Ascending aorta (tissue), 2 donors: ENCODE measurements at regions of chr15 and their contacts with region 1.

Region 1: GRCh38 chr15:73972984-73973682 is 19.0 kb downstream of the STOML1 start:
- DNase-seq: peak; percentile 21 to 93
- H3K4me3 ChIP-seq: peak overlapping the region; percentile 39 to 50
- H3K27ac ChIP-seq: no peak overlapping the region
- H3K4me1 ChIP-seq: peaks cover 0 to 8% of the 10 kb centered on the region in 2 donors
- H3K27me3 ChIP-seq: no peaks in the 10 kb centered on the region
- CTCF ChIP-seq: peak; percentile 90 to 92 (median 91)

Region 2: DNA sequence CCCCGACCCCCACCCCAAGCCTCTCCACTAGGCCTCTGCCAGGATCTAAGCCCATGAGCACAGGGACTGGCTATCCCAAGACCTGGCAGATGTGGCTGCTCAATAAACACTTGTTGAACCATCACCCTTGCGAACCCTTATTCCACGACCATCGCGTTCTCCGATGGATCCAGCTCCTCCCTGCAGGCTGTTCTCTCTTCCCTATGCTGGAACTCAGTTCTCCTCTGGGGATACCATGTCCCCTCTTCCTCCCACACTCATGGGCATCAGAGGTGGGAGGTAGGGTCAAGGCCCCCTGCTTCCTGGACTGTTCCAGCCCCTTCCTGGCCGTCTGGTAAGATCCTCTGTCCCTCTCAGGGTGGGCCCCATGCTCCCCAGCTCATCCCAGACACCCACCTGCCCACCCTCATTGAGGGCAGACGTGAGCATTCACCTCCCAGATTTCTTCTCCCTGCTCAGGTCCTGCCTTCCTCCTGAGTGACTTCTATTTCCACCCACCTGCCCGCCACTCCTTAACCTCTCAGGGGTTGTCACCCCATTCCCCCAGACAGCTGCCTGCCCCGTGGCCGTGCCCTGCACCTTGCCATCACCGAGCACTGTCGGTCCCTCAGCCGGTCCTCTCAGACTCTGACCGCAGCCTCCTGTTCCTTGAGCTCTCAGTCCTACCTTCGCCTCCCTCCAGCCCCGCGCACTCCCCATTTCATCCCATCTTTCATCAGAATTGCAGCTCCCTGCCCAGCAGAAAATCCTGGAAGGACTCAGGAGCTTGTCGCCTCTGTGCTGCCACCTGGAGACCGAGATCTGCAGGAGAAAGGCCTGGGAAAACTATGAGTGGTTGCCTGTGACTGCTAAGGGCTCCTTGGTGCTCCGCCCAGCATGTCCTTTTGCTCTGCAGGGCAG is 63.4 kb after region 1 on chr15:
- intact Hi-C with region 1: loop called (anchors 1 kb)
- DNase-seq: peak in 1 of 2 donors; percentile 81
- H3K4me3 ChIP-seq: no peak overlapping the region
- H3K27ac ChIP-seq: peak overlapping the region in 1 of 2 donors; percentile 7
- H3K4me1 ChIP-seq: peaks cover 16 to 25% of the 10 kb centered on the region in 2 donors
- H3K27me3 ChIP-seq: no peaks in the 10 kb centered on the region
- CTCF ChIP-seq: peak in 2 of 3 experiments; percentile 29 to 54

Region 3: GRCh38 chr15:74322181-74323076 is 349.3 kb after region 1 on chr15:
- intact Hi-C with region 1: loop called (anchors 2 kb)
- DNase-seq: peak in 1 of 2 donors; percentile 75
- H3K4me3 ChIP-seq: no peak overlapping the region
- H3K27ac ChIP-seq: no peak overlapping the region
- H3K4me1 ChIP-seq: peaks cover 12 to 19% of the 10 kb centered on the region in 2 donors
- H3K27me3 ChIP-seq: no peaks in the 10 kb centered on the region
- CTCF ChIP-seq: peak; percentile 85 to 93 (median 91)